IMR-90 (cell line): ENCODE measurements at regions of chr11 and their contacts with region 1.

Region 1: DNA sequence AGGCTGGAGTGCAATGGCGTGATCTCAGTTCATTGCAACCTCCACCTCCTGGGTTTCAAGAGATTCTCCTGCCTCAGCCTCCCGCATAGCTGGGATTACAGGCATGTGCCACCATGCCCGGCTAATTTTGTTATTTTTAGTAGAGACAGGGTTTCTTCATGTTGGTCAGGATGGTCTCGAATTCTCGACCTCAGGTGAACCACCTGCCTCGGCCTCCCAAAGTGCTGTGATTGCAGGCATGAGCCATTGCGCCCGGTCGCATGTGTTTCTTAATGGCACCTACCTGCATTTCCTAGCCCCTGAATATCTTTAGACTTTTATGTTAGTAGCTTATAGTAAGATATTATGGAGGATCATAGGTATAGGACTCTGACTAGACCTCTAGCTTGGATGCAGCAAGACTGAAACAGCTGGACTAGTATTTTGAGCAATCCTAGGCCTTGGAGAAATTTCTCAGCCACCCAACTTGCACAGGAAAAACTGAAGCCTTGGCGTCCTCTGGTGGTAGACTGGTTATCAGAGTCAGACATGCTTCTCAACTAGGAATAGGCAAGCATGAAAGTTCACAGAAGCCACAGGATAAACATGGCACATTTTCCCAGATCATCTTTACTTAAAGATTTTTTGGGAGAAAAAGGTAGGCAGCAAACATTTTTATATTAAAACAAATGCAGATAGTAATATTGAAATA is 22.7 kb upstream of the C1QTNF4 start:
- DNase-seq: peak; percentile 85
- ATAC-seq: peak; percentile 96
- H3K4me3 ChIP-seq: no peak overlapping the region
- H3K27ac ChIP-seq: no peak overlapping the region
- H3K4me1 ChIP-seq: peaks cover 4% of the 10 kb centered on the region
- H3K27me3 ChIP-seq: no peaks in the 10 kb centered on the region
- CTCF ChIP-seq: peak; percentile 96
- POLR2A ChIP-seq: 0 out of 2 replicates have a peak, but pooled peaks have one; percentile 39
- RAD21 ChIP-seq: peak; percentile 96

Region 2: GRCh38 chr11:47329987-47330931 is 286.6 kb before region 1 on chr11:
- CTCF ChIA-PET with region 1: no interaction called
- POLR2A ChIA-PET with region 1: no interaction called
- dilution Hi-C with region 1: no loop called
- in situ Hi-C with region 1: no loop called
- intact Hi-C with region 1: no loop called
- DNase-seq: peak; percentile 29
- ATAC-seq: peak; percentile 54
- H3K4me3 ChIP-seq: no peak overlapping the region
- H3K27ac ChIP-seq: no peak overlapping the region
- H3K4me1 ChIP-seq: 0 out of 2 replicates have a peak, but pooled peaks cover 2% of the 10 kb centered on the region
- H3K27me3 ChIP-seq: no peaks in the 10 kb centered on the region
- CTCF ChIP-seq: no peak
- POLR2A ChIP-seq: no peak
- RAD21 ChIP-seq: no peak

Region 3: GRCh38 chr11:47373876-47374720 is 242.8 kb before region 1 on chr11:
- CTCF ChIA-PET with region 1: interaction called, 5 read pairs
- POLR2A ChIA-PET with region 1: no interaction called
- dilution Hi-C with region 1: no loop called
- in situ Hi-C with region 1: no loop called
- intact Hi-C with region 1: loop called (anchors 1 kb)
- DNase-seq: peak; percentile 62
- ATAC-seq: peak; percentile 98
- H3K4me3 ChIP-seq: no peak overlapping the region
- H3K27ac ChIP-seq: no peak overlapping the region
- H3K4me1 ChIP-seq: peaks cover 5% of the 10 kb centered on the region
- H3K27me3 ChIP-seq: peaks cover 4% of the 10 kb centered on the region
- CTCF ChIP-seq: peak; percentile 88
- POLR2A ChIP-seq: no peak
- RAD21 ChIP-seq: peak; percentile 76

Region 4: DNA sequence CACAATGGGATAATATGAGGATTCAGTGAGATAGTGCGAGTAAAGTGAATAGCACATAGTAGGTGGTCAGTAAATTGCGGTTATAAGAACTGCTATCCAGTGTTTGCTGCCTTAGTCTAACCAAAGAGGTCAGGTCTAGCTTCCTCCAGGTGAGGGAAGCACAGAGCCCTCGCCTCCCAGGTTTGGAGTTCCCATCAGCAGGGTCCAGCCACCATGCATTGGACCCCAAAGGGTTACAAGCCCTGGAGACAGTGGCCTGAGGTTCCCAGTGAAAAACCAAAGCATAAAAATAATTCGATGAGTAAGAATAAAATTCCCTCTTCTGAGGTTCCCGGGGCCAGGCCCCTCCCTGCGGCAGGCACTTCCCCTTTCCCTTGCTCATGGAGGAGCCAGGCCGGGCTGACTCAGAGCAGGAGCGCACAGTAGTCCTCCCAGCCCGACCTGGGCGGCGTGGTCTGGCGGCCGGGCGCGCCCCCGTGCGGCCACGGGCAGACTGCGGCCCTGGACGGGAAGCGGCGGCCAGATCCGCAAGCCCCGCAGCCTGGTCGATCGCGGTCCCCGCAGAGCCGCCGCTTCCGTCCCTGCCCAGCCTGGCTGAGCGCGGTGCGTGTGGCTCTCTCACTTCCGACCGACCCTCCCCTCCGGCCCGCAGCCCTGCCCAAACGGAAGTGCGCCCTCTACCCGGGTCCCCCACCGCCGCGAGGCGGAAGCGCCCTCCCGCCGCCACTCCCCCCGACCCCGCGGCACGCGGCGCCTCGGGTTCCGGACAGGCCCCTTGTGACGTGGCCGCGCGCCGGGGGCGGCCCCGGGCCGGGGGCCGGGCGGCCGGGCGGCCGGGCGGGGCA is 208.9 kb before region 1 on chr11 and contains the start of gene SLC39A13:
- CTCF ChIA-PET with region 1: no interaction called
- POLR2A ChIA-PET with region 1: no interaction called
- dilution Hi-C with region 1: no loop called
- in situ Hi-C with region 1: no loop called
- intact Hi-C with region 1: loop called (anchors 5 kb)
- DNase-seq: peak; percentile 95
- ATAC-seq: peak; percentile 85
- H3K4me3 ChIP-seq: peak within 1 kb of the TSS; percentile 82
- H3K27ac ChIP-seq: peak within 1 kb of the TSS; percentile 98
- H3K4me1 ChIP-seq: peaks cover 22% of the 10 kb centered on the region
- H3K27me3 ChIP-seq: no peaks in the 10 kb centered on the region
- CTCF ChIP-seq: peak; percentile 97
- POLR2A ChIP-seq: peak; percentile 76
- RAD21 ChIP-seq: peak; percentile 85
- total RNA-seq, gene SLC39A13: 29.2 and 32.4 TPM in 2 replicates

Region 5: GRCh38 chr11:47477323-47477722 is 139.5 kb before region 1 on chr11:
- CTCF ChIA-PET with region 1: no interaction called
- POLR2A ChIA-PET with region 1: no interaction called
- dilution Hi-C with region 1: no loop called
- in situ Hi-C with region 1: loop called (anchors 10 kb)
- intact Hi-C with region 1: loop called (anchors 1 kb)
- DNase-seq: peak; percentile 69
- ATAC-seq: peak; percentile 66
- H3K4me3 ChIP-seq: no peak overlapping the region
- H3K27ac ChIP-seq: no peak overlapping the region
- H3K4me1 ChIP-seq: peaks cover 7% of the 10 kb centered on the region
- H3K27me3 ChIP-seq: no peaks in the 10 kb centered on the region
- CTCF ChIP-seq: no peak
- POLR2A ChIP-seq: no peak
- RAD21 ChIP-seq: no peak

Region 6: DNA sequence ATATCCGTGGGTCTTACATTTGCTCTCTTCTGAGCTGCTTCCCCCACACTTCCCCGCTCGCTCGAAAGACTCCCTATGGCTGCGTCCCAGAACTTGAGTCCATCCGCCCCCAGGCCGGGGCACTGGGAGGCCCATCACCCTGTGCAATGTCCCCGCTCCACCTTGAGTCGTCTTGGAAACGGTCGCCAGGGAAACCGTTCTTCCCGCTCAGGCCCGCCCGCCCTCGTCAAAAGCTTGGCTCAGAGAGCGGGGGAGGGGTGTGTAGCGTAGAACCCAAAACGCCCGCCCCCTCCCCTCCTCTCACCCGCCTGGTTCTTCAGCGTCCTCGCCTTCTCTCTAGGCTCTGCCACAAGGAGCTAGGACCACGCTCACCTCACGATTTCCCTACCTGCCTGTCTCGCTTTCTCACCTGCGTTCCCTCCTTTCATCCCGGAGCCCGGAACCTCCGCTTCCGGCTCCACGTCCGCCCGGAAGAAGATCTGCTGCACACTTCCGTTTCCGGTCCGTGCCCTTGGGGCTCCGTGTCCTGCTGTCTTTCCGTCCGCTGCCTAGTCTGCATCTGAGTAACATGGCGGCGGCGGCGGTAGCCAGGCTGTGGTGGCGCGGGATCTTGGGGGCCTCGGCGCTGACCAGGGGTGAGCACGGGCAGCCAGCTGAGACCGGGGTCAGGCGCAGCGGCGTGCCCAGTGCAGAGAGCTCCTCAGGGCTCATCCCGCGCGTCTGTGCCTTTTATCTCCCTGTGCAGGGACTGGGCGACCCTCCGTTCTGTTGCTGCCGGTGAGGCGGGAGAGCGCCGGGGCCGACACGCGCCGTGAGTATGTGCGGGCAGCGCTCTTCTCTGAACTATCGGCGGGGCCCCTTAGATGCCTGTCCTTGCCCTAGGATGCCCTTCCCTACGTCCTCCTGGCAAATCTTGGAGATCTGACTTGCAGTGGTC is 38.1 kb before region 1 on chr11 and contains the starts of genes KBTBD4 and NDUFS3:
- CTCF ChIA-PET with region 1: interaction called, 3 read pairs
- POLR2A ChIA-PET with region 1: no interaction called
- dilution Hi-C with region 1: no loop called
- in situ Hi-C with region 1: no loop called
- intact Hi-C with region 1: loop called (anchors 1 kb)
- DNase-seq: peak; percentile 87
- ATAC-seq: peak; percentile 94
- H3K4me3 ChIP-seq: peak within 1 kb of the TSS; percentile 54
- H3K27ac ChIP-seq: peak within 1 kb of the TSS; percentile 90
- H3K4me1 ChIP-seq: peaks cover 10% of the 10 kb centered on the region
- H3K27me3 ChIP-seq: no peaks in the 10 kb centered on the region
- CTCF ChIP-seq: no peak
- POLR2A ChIP-seq: peak; percentile 65; the same call in 1 of the 2 replicates
- RAD21 ChIP-seq: 0 out of 2 replicates have a peak, but pooled peaks have one; percentile 8
- total RNA-seq, gene KBTBD4: 37.2 and 41.6 TPM in 2 replicates
- total RNA-seq, gene NDUFS3: 77.1 and 79.7 TPM in 2 replicates

Region 7: DNA sequence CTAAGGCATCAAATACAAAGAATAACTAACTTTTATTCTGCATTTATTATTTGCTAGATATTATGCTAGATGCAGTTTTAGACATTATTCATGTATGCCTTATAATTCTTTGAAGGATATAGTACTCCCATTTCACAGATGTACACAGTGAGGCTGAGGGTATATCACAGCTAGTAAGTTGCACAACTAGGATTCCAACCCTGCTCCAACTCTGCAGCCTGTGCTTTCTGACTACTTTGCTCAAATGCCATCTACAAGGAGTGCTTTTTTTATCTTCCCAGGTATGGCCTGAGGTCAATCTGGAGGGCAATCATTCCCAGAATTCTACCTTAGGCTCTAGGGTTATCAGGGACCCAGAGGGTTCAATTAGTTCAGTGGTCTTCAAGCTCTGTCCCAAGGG is 202.9 kb after region 1 on chr11:
- CTCF ChIA-PET with region 1: no interaction called
- POLR2A ChIA-PET with region 1: no interaction called
- dilution Hi-C with region 1: no loop called
- in situ Hi-C with region 1: no loop called
- intact Hi-C with region 1: loop called (anchors 10 kb)
- DNase-seq: no peak
- ATAC-seq: no peak
- H3K4me3 ChIP-seq: no peak overlapping the region
- H3K27ac ChIP-seq: no peak overlapping the region
- H3K4me1 ChIP-seq: no peaks in the 10 kb centered on the region
- H3K27me3 ChIP-seq: no peaks in the 10 kb centered on the region
- CTCF ChIP-seq: no peak
- POLR2A ChIP-seq: no peak
- RAD21 ChIP-seq: no peak